ENCODE measurements at regions of chr2 and their contacts with region 1.

Region 1: DNA sequence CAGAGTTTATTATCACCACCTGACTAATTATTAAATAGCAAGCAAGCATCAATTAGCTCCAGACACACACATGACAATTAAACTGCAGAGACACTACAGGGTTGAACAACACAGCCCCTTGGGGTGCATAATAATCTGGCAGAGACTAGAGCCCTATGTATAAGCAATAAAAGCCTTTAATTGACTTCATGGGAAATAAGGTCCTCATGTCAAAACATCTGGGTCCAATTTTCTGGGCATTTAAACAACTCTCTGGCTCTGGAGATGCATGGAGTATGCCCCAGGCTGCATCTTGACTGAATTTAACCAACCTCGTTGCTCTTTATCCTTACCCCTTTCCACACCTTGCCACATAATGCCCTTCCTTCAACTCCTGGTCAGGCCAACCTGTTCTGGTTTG is 270.7 kb upstream of the THUMPD2 start:
- DNase-seq: no peak
- ATAC-seq: no peak

Region 2: DNA sequence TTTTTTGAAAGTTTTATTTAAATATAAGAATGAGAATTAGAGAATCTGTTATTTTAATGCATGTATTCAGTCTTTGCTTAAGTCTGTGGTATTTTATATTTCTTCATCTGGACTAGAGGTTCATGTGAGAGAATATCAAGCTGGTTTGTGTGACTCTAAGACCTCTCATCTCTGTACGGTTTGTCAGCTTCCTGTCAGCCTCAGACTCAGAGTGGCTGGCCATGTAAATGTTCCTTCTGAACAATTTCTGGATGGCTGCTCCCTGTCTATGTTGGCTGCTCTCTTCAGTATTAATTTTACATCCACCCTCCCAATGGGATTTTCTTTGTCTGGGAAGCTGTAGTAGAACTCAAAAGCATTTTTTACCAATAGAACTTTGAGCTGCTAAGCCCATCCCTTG is 45.4 kb before region 1 on chr2:
- intact Hi-C with region 1: no loop called
- DNase-seq: no peak
- ATAC-seq: no peak

Region 3: GRCh38 chr2:40113272-40113968 is 63.6 kb after region 1 on chr2:
- intact Hi-C with region 1: loop called (anchors 5 kb)
- DNase-seq: no peak
- ATAC-seq: no peak

Measured in sciatic nerve (tissue), 2 donors.